Activated naive CD4-positive, alpha-beta T cell treated with anti-CD3 and anti-CD28 coated beads for 36 hours (primary cell): ENCODE measurements at regions of chr2 and their contacts with region 1.

Region 1: DNA sequence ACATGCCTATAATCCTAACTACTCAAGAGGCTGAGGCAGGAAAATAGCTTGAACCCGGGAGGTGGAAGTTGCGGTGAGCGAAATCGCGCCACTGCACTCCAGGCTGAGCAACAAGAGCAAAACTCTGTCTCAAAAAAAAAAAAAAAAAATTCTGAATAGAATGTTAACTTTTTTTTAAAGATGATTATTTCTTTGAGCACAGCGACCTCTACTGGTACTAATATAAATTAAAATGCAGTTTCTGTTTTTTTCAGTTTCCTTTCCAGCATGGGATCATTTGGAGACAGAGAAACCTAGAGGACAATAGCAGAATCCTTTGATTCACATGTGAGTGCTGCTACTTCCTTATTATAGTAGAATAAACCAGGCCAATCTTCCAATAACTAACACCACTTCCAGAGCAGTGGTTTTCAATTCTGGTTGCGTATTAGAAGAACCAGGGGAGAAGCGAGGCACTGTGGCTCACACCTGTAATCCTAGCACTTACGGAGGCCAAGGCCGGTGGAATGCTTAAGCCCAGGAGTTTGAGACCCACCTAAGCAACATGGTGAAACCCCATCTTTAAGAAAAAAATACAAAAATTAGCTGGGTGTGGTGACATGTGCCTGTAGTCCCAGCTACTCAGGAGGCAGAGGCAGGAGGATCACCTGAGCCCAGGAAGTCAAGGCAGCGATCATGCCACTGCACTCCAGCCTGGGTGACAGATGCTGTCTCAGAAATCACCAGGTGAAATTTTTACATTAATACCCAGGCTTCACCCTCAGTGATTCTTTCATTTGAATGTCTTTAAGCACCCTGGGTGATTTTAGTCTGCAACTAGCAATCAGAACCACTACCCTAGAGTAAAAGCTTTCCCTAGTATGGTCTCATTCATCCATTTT is 10.1 kb downstream of the SRSF7 start:
- DNase-seq: peak; percentile 33
- H3K4me3 Mint-ChIP-seq: no peak overlapping the region
- H3K27ac Mint-ChIP-seq: peak overlapping the region; percentile 47
- H3K4me1 Mint-ChIP-seq: peaks cover 48% of the 10 kb centered on the region
- H3K27me3 Mint-ChIP-seq: no peaks in the 10 kb centered on the region

Region 2: DNA sequence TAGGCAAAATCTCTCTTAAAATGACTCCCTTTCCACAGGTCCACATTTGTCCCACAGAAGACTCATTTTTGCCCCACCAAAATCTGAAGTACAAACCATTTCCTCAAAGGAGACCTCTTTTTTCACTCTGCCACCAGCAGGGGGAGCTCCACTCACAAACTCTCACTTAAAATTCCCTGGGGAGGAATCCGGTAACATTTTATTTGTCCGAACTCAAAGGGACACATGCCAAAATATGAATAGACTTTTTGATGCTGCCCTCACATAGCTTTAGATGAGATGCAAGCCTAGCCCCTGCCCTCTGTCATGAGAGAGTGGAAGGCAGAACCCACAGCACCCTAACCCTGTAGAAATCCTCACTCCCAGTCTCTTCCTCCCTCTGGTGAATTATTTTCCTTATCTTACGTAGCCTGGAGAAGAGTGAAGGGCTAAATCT is 758.9 kb before region 1 on chr2:
- CTCF ChIA-PET with region 1: no interaction called
- intact Hi-C with region 1: loop called (anchors 5 kb)
- DNase-seq: peak; percentile 73
- H3K4me3 Mint-ChIP-seq: no peak overlapping the region
- H3K27ac Mint-ChIP-seq: no peak overlapping the region
- H3K4me1 Mint-ChIP-seq: peaks cover 6% of the 10 kb centered on the region
- H3K27me3 Mint-ChIP-seq: no peaks in the 10 kb centered on the region

Region 3: DNA sequence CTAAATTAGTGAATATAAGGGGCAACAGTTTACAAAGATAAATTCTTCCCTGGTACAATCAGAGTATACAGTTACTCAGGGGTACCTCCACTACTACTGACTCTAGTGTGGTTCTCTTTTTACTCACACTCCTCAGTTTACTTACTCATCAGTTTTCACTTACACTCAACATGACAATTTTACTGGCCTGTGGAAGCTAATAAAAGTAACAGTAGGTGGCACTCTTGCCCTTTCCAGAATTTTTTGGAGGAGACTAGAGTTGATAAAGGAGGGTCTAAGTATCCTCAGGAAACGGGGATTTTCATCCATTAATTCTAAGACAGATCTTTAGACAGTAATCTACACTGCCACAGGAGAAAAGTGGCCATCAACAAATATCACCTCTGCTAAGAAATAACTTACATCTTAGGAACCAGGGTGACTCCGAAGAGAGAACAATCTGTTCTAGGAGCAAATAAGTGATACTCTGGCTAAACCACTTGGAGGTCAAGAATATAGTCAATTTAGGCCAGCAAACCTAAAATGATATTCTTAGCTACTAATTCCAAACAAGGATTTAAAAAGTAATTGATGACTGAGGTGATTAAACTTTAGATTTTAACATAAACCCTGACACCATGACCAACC is 425.3 kb before region 1 on chr2:
- CTCF ChIA-PET with region 1: no interaction called
- intact Hi-C with region 1: loop called (anchors 5 kb)
- DNase-seq: peak; percentile 32
- H3K4me3 Mint-ChIP-seq: no peak overlapping the region
- H3K27ac Mint-ChIP-seq: no peak overlapping the region
- H3K4me1 Mint-ChIP-seq: peaks cover 12% of the 10 kb centered on the region
- H3K27me3 Mint-ChIP-seq: no peaks in the 10 kb centered on the region

Region 4: GRCh38 chr2:38462109-38462759 is 278.9 kb before region 1 on chr2:
- CTCF ChIA-PET with region 1: no interaction called
- intact Hi-C with region 1: no loop called
- DNase-seq: peak; percentile 74
- H3K4me3 Mint-ChIP-seq: no peak overlapping the region
- H3K27ac Mint-ChIP-seq: no peak overlapping the region
- H3K4me1 Mint-ChIP-seq: peaks cover 9% of the 10 kb centered on the region
- H3K27me3 Mint-ChIP-seq: peaks cover 5% of the 10 kb centered on the region

Region 5: DNA sequence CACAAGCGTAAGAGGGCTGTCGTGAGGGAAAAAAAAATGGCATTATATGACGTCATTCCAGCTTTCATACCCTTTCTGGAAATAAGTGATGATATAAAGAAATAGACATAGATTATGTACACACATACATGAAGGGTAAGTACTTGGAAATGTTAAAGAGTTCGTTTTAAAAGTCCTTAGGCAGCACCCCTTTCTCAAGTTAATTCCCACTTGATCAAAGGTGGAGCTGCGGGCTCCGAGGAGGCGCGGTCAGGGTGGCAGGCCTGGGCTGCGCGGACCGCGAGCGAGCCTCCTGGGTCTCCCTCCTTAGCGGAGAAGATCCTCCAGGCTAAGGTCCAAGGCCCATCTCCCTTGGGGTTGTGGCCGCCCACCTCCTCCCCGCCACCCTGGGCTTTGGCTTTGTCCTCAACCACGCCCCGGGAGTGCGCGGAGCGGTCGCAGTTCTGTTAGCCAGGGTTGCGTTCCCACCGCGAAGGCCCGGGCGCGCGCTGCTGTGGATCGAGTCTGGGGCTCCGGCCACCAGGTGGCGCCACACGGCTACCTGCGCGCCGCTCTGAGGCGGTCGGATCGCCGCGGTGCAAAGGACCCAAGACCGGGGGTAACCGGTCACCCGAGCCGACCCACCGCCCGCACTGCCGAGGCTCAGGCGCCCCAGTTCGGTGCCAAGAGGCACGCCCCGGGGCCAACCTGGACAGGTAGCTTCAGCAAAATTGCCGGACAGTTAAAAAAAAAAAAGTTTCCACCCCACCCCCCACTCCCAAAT is 205.2 kb before region 1 on chr2:
- CTCF ChIA-PET with region 1: interaction called, 109 read pairs
- intact Hi-C with region 1: loop called (anchors 1 kb)
- DNase-seq: peak; percentile 84
- H3K4me3 Mint-ChIP-seq: peak overlapping the region; percentile 54
- H3K27ac Mint-ChIP-seq: no peak overlapping the region
- H3K4me1 Mint-ChIP-seq: no peaks in the 10 kb centered on the region
- H3K27me3 Mint-ChIP-seq: peaks cover 5% of the 10 kb centered on the region

Region 6: DNA sequence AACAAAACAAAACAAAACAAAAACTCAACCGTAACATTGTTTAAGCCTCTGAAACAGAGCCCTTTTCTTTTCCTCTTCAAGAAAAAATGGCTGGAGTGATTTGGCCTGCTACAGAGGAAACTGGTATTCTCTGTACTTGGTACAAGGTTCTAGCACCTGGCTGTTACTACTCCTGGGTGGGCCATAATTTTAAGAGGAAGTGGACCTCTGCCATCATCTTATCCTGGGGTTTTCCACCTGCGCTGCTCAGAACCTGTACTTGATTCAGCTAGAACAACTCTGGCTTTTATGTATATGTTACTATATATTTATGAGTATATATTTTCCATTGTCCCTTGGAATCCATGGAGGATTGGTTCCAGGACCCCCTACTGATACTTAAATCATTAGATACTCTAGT is 12.4 kb before region 1 on chr2:
- CTCF ChIA-PET with region 1: interaction called, 50 read pairs
- intact Hi-C with region 1: loop called (anchors 1 kb)
- DNase-seq: no peak
- H3K4me3 Mint-ChIP-seq: no peak overlapping the region
- H3K27ac Mint-ChIP-seq: no peak overlapping the region
- H3K4me1 Mint-ChIP-seq: peaks cover 21% of the 10 kb centered on the region
- H3K27me3 Mint-ChIP-seq: no peaks in the 10 kb centered on the region

Region 7: GRCh38 chr2:38778687-38779082 is 37.6 kb after region 1 on chr2:
- CTCF ChIA-PET with region 1: interaction called, 3 read pairs
- intact Hi-C with region 1: loop called (anchors 5 kb)
- DNase-seq: no peak
- H3K4me3 Mint-ChIP-seq: peak overlapping the region; percentile 95
- H3K27ac Mint-ChIP-seq: peak overlapping the region; percentile 89
- H3K4me1 Mint-ChIP-seq: peaks cover 11% of the 10 kb centered on the region
- H3K27me3 Mint-ChIP-seq: peaks cover 10% of the 10 kb centered on the region